Right ventricle myocardium superior (tissue), 1 donor: ENCODE measurements at regions of chr5 and their contacts with region 1.

Region 1: DNA sequence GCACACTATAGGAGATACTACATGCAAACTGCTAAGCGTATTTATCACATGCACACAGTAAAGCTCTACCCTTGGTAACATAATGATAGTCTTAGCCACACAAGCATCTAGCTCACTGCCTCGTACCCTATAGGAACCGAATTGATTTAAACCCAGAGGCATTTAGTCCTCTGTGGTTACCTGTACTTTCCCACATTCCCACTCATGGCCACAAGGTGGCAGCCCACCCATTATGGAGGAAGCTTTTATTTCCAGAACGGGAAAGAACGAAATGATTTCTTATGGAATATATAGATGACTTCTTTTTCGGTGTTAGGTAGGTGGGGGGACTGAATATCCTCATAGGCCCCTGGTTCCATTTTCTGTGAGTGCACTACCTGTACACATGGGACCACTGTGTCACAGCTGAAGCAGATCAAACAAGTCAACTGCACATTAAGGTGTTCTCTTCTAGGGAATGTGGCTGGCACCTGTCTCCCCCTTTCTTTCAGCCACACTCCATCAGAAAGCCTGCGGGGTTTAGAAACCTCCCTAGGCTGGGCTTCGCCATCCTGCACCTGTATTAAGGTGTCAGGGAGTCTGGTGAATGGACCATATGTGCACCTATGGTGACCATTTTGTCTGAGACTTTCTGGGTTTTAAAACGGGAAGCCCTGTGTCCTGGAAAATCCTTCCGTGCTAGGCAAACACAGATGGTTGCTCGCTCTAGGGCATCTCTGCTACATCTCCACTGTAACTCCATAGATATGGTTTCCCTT is 313.2 kb downstream of the SLIT3 start:
- DNase-seq: peak; percentile 75
- ATAC-seq: peak; percentile 85

Region 2: DNA sequence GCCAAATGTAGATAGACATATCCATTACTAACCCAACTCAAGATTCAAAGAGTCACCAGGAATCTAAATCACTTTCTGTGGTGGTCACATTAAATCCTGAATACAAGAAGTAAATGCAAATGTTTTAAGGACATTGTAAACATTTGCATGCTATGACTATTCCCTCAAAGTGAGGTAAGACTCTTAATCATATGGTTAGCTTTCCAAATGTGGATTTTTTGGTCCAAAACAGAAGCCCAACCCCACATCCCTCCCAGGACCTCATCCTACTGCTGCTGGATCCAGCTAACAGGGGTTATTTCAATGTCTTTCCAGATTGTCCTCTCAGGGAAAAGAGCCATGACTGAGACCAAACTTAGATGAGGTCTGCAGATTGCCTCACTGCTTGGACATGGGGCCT is 180.4 kb before region 1 on chr5:
- intact Hi-C with region 1: no loop called
- DNase-seq: no peak
- ATAC-seq: no peak

Region 3: GRCh38 chr5:168890816-168891812 is 96.6 kb before region 1 on chr5:
- intact Hi-C with region 1: no loop called
- DNase-seq: no peak
- ATAC-seq: no peak

Region 4: GRCh38 chr5:169197343-169197742 is 209.6 kb after region 1 on chr5:
- intact Hi-C with region 1: loop called (anchors 5 kb)
- DNase-seq: no peak
- ATAC-seq: peak; percentile 80

Region 5: DNA sequence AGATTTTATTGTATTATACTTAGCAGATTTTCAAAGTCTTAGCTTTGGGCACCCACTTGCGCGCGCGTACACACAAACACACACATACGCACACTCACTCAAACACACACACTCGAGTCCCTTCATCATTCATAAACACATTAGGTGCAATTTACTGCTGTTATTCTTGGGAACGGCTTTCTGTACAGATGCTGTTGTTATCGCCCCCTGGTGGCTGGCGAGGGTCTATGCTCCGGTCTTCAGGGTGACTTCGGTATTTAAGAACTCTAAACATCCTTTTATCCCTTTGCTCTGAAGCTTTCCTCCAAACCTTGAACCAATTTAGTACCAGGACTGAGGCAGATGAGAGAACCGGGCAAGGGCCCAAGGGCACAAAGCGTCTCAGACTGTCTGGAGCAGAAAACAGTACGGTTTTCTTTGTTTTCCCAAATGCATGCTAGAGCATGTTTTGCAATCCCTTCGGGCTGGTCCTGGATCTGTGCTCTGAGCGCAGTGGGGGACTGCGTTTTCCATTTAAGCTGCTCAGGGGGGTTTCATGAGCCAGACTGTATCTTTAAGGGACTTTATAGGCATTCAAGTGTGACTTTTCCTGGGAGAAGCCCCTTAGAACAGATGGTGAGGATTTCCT is 314.9 kb after region 1 on chr5:
- intact Hi-C with region 1: loop called (anchors 5 kb)
- DNase-seq: peak; percentile 83
- ATAC-seq: peak; percentile 66

Region 6: GRCh38 chr5:169548315-169548714 is 560.6 kb after region 1 on chr5:
- intact Hi-C with region 1: loop called (anchors 10 kb)
- DNase-seq: no peak
- ATAC-seq: peak; percentile 92

Region 7: GRCh38 chr5:169583424-169584204 is 595.9 kb after region 1 on chr5 and contains the start of gene SPDL1:
- intact Hi-C with region 1: loop called (anchors 5 kb)
- DNase-seq: peak; percentile 97
- ATAC-seq: peak; percentile 96
- total RNA-seq, gene SPDL1: 3.4 TPM